ENCODE measurements at regions of chr17 and their contacts with region 1.

Region 1: DNA sequence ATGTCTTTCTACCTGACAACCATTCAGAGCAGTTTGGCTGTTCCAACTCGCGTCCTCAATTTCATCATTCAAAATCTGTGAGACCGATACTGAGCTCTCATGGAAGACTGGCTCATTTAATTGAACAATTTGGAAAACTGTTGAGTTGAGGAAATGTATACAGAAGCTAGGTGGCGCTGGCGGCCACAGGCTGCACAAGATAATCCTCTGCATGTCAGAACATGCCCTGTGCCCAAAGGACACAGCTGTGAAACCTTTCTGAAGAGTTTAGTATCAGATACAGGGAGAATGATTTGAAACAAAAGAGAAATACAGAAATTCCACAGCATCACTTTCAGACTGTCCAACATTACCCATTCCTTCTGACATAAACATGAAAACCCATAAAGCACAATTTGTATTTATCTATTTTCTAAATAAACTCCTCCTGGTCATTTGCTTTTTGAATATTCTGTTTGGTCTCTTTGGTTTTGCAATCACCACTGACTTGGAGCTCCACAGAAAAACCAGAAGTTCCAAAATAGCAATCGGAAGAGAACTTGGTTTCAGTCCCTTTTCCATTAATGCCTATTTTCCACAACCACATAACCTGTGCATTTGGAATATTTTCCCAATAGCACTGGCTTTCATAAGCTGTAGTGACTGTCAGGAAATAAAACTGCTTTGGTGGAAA is 192.8 kb downstream of the MAP2K6 start:
- DNase-seq: peak; percentile 65 to 78
- ATAC-seq: peak; percentile 78 to 92 (median 87)
- H3K4me3 ChIP-seq: no peak overlapping the region
- H3K27ac ChIP-seq: peak overlapping the region; percentile 5 to 82 (median 50)
- H3K4me1 ChIP-seq: peaks cover 15 to 40% (median 35%) of the 10 kb centered on the region in 9 donors
- H3K27me3 ChIP-seq: no peaks in the 10 kb centered on the region
- CTCF ChIP-seq: peak; percentile 74 to 92 (median 88)

Region 2: GRCh38 chr17:69575346-69575761 is 31.9 kb before region 1 on chr17:
- intact Hi-C with region 1: loop called in 1 of 10 experiments (anchors 5 kb)
- DNase-seq: peak in 1 of 2 donors; percentile 15
- ATAC-seq: peak in 7 of 8 donors; percentile 29 to 81 (median 66)
- H3K4me3 ChIP-seq: no peak overlapping the region
- H3K27ac ChIP-seq: peak overlapping the region in 9 of 10 donors; percentile 1 to 54 (median 29)
- H3K4me1 ChIP-seq: peaks cover 0 to 29% (median 19%) of the 10 kb centered on the region in 9 donors
- H3K27me3 ChIP-seq: no peaks in the 10 kb centered on the region
- CTCF ChIP-seq: no peak